ENCODE measurements at regions of chr20 and their contacts with region 1.

Region 1: GRCh38 chr20:10558635-10559187 is 115.1 kb downstream of the JAG1 start:
- DNase-seq: peak; percentile 99
- ATAC-seq: peak; percentile 89
- H3K4me3 ChIP-seq: peak overlapping the region; percentile 1; the same call in 1 of the 2 replicates
- H3K27ac ChIP-seq: peak overlapping the region; percentile 88
- H3K4me1 ChIP-seq: peaks cover 15% of the 10 kb centered on the region
- H3K27me3 ChIP-seq: no peaks in the 10 kb centered on the region
- CTCF ChIP-seq: peak; percentile 28; the same call in 1 of the 2 replicates
- POLR2A ChIP-seq: 0 out of 2 replicates have a peak, but pooled peaks have one; percentile 21
- RAD21 ChIP-seq: no peak; the same call in none of the 2 replicates

Region 2: GRCh38 chr20:10603971-10604864 is 45.5 kb after region 1 on chr20:
- CTCF ChIA-PET with region 1: no interaction called
- POLR2A ChIA-PET with region 1: no interaction called
- dilution Hi-C with region 1: no loop called
- in situ Hi-C with region 1: no loop called
- intact Hi-C with region 1: loop called (anchors 2 kb)
- DNase-seq: peak; percentile 94
- ATAC-seq: peak; percentile 81
- H3K4me3 ChIP-seq: no peak overlapping the region
- H3K27ac ChIP-seq: peak overlapping the region; percentile 74
- H3K4me1 ChIP-seq: peaks cover 20% of the 10 kb centered on the region
- H3K27me3 ChIP-seq: no peaks in the 10 kb centered on the region
- CTCF ChIP-seq: no peak
- POLR2A ChIP-seq: no peak
- RAD21 ChIP-seq: peak; percentile 27; the same call in 1 of the 2 replicates

Region 3: GRCh38 chr20:10636326-10636818 is 77.7 kb after region 1 on chr20:
- CTCF ChIA-PET with region 1: no interaction called
- POLR2A ChIA-PET with region 1: no interaction called
- dilution Hi-C with region 1: no loop called
- in situ Hi-C with region 1: no loop called
- intact Hi-C with region 1: loop called (anchors 2 kb)
- DNase-seq: peak; percentile 64
- ATAC-seq: peak; percentile 9; the same call in 1 of the 2 replicates
- H3K4me3 ChIP-seq: no peak overlapping the region
- H3K27ac ChIP-seq: peak overlapping the region; percentile 21; the same call in 1 of the 2 replicates
- H3K4me1 ChIP-seq: peaks cover 24% of the 10 kb centered on the region
- H3K27me3 ChIP-seq: no peaks in the 10 kb centered on the region
- CTCF ChIP-seq: no peak
- POLR2A ChIP-seq: no peak
- RAD21 ChIP-seq: no peak

Region 4: GRCh38 chr20:10654630-10655029 is 95.9 kb after region 1 on chr20:
- CTCF ChIA-PET with region 1: no interaction called
- POLR2A ChIA-PET with region 1: no interaction called
- dilution Hi-C with region 1: no loop called
- in situ Hi-C with region 1: loop called (anchors 5 kb)
- intact Hi-C with region 1: loop called (anchors 5 kb)
- DNase-seq: no peak
- ATAC-seq: no peak
- H3K4me3 ChIP-seq: no peak overlapping the region
- H3K27ac ChIP-seq: no peak overlapping the region
- H3K4me1 ChIP-seq: peaks cover 28% of the 10 kb centered on the region
- H3K27me3 ChIP-seq: no peaks in the 10 kb centered on the region
- CTCF ChIP-seq: no peak
- POLR2A ChIP-seq: no peak
- RAD21 ChIP-seq: no peak

Region 5: DNA sequence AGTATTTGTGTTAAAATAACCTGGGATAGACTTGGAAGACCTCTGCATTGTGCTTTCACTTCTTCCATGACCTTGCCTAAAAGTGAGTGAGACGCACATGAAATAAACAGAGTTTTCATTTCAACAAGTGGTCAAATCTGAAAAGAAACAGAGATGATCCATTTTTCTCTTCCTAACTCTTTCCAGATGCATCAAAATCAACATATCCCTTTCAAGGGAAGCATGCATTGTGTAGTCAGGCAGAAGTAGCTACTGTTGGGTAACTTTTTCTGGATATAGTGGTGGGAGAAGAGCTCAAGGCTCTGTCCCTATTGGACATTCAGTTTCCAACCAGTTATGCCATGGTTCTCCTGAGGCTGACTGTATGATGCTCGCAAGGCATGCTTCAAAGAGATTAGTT is 348.1 kb after region 1 on chr20:
- CTCF ChIA-PET with region 1: no interaction called
- POLR2A ChIA-PET with region 1: no interaction called
- dilution Hi-C with region 1: no loop called
- in situ Hi-C with region 1: no loop called
- intact Hi-C with region 1: loop called (anchors 5 kb)
- DNase-seq: peak; percentile 5
- ATAC-seq: peak; percentile 54; the same call in 1 of the 2 replicates
- H3K4me3 ChIP-seq: no peak overlapping the region
- H3K27ac ChIP-seq: no peak overlapping the region
- H3K4me1 ChIP-seq: peaks cover 12% of the 10 kb centered on the region
- H3K27me3 ChIP-seq: no peaks in the 10 kb centered on the region; the same call in 1 of the 2 replicates
- CTCF ChIP-seq: no peak
- POLR2A ChIP-seq: no peak
- RAD21 ChIP-seq: no peak

Measured in IMR-90 (cell line).